Left ventricle myocardium inferior (tissue), 1 donor: ENCODE measurements at regions of chr1 and their contacts with region 1.

Region 1: GRCh38 chr1:59759156-59759925 is 55.4 kb upstream of the HOOK1 start:
- DNase-seq: peak; percentile 77
- H3K4me3 ChIP-seq: peak overlapping the region; percentile 56
- H3K27ac ChIP-seq: peak overlapping the region; percentile 72
- H3K4me1 ChIP-seq: peaks cover 22% of the 10 kb centered on the region
- H3K27me3 ChIP-seq: no peaks in the 10 kb centered on the region
- CTCF ChIP-seq: peak; percentile 98

Region 2: DNA sequence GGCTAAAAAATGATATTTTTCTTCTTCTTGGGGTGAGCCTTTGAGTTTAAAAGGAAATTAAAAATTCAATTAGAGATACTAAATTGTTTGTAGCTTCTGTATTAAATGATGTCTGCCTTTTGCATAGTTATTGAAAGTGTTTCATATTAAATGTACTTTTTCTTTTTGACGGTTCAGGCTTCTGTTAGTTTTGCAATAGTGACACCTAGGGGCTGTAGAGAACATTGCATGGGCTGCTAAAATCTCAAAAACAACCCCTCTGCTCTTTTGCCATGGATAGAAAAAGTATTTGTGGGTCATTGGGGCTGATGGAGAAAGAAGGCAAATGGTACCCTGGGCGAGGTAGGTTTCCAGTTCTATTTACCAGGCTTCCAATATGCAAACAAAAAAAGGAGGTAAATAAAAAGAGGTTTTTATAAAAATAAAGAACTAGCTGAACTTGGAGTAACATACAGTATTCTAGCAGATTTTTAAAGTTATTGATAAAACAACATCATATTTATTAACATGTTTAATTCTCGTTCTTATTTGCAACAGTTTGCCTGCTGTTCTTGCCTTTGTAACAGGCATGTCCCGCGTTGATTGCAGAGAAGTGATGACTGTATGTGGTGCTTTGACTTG is 60.0 kb before region 1 on chr1:
- intact Hi-C with region 1: loop called (anchors 5 kb)
- DNase-seq: no peak
- H3K4me3 ChIP-seq: no peak overlapping the region
- H3K27ac ChIP-seq: peak overlapping the region; percentile 45
- H3K4me1 ChIP-seq: peaks cover 43% of the 10 kb centered on the region
- H3K27me3 ChIP-seq: no peaks in the 10 kb centered on the region
- CTCF ChIP-seq: peak; percentile 97

Region 3: GRCh38 chr1:59714966-59715365 is 44.4 kb before region 1 on chr1:
- intact Hi-C with region 1: no loop called
- DNase-seq: no peak
- H3K4me3 ChIP-seq: no peak overlapping the region
- H3K27ac ChIP-seq: no peak overlapping the region
- H3K4me1 ChIP-seq: peaks cover 23% of the 10 kb centered on the region
- H3K27me3 ChIP-seq: no peaks in the 10 kb centered on the region
- CTCF ChIP-seq: no peak

Region 4: GRCh38 chr1:59803458-59804038 is 44.2 kb after region 1 on chr1:
- intact Hi-C with region 1: no loop called
- DNase-seq: no peak
- H3K4me3 ChIP-seq: no peak overlapping the region
- H3K27ac ChIP-seq: no peak overlapping the region
- H3K4me1 ChIP-seq: no peaks in the 10 kb centered on the region
- H3K27me3 ChIP-seq: no peaks in the 10 kb centered on the region
- CTCF ChIP-seq: no peak